WTC11 (cell line): ENCODE measurements at regions of chr7 and their contacts with region 1.

Region 1: GRCh38 chr7:100456558-100456957 is 7.5 kb downstream of the SPACDR start:
- DNase-seq: peak; percentile 47
- ATAC-seq: peak; percentile 73
- H3K4me3 Mint-ChIP-seq: no peak overlapping the region
- H3K27ac Mint-ChIP-seq: no peak overlapping the region
- H3K4me1 Mint-ChIP-seq: peaks cover 10% of the 10 kb centered on the region
- H3K27me3 Mint-ChIP-seq: no peaks in the 10 kb centered on the region; the same call in 1 of the 2 replicates
- CTCF ChIP-seq: no peak

Region 2: DNA sequence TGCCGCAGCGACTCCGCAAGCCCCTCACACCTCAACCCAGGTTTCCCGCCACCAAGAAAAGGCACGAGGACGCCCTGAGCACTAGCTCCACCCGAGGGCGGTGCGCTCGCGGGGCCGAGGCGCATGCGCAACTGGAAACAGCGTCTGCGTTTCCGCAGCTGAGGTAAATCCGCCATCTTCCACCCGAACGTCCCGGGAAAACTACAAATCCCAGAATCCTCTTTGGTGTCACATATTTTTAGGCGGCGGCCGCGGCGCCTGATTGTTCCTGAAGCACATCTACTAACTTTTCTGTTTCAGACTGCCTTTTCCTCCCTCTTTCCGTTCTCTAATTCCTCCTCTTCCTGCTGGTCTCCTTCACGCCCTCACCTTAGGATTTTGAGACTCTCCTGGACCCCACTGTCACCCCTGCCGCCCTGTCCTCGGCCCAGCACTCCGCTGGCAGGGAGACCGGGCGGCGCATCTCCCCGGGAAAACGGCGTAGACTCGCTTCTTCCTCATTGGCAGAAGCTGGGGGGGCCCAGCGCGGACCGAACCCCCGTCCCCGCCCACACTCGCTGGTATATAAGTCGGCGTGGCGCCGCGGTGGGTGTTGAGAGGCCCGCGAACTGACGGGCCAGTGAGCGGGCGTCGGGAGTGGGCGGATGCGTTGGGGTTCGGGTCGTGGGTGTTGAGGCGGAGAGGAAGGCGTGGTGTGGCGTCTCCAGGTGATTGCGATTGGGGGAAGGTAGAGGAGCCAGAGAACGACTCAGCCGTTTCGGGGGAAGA is 28.2 kb before region 1 on chr7 and contains the start of gene ZCWPW1:
- CTCF ChIA-PET with region 1: interaction called, 20 read pairs
- POLR2A ChIA-PET with region 1: no interaction called
- DNase-seq: peak; percentile 95
- ATAC-seq: peak; percentile 47
- H3K4me3 Mint-ChIP-seq: peak within 1 kb of the TSS; percentile 97
- H3K27ac Mint-ChIP-seq: peak within 1 kb of the TSS; percentile 100
- H3K4me1 Mint-ChIP-seq: peaks cover 19% of the 10 kb centered on the region
- H3K27me3 Mint-ChIP-seq: peaks cover 30% of the 10 kb centered on the region
- CTCF ChIP-seq: no peak
- total RNA-seq, gene ZCWPW1: 1.4 to 1.5 TPM (median 1.4 TPM) in 3 replicates

Region 3: GRCh38 chr7:100444311-100445278 is 12.0 kb before region 1 on chr7:
- CTCF ChIA-PET with region 1: interaction called, 46 read pairs
- POLR2A ChIA-PET with region 1: no interaction called
- DNase-seq: no peak
- ATAC-seq: peak; percentile 31
- H3K4me3 Mint-ChIP-seq: no peak overlapping the region
- H3K27ac Mint-ChIP-seq: peak overlapping the region; percentile 63
- H3K4me1 Mint-ChIP-seq: peaks cover 5% of the 10 kb centered on the region
- H3K27me3 Mint-ChIP-seq: no peaks in the 10 kb centered on the region
- CTCF ChIP-seq: no peak

Region 4: GRCh38 chr7:100478966-100479665 is 22.6 kb after region 1 on chr7 and contains the start of gene TSC22D4:
- CTCF ChIA-PET with region 1: interaction called, 11 read pairs
- POLR2A ChIA-PET with region 1: interaction called, 3 read pairs
- DNase-seq: peak; percentile 96
- ATAC-seq: peak; percentile 70
- H3K4me3 Mint-ChIP-seq: peak within 1 kb of the TSS; percentile 78
- H3K27ac Mint-ChIP-seq: peak within 1 kb of the TSS; percentile 92
- H3K4me1 Mint-ChIP-seq: peaks cover 20% of the 10 kb centered on the region
- H3K27me3 Mint-ChIP-seq: no peaks in the 10 kb centered on the region
- CTCF ChIP-seq: no peak
- total RNA-seq, gene TSC22D4: 27.5 to 34.5 TPM (median 29.7 TPM) in 3 replicates

Region 5: DNA sequence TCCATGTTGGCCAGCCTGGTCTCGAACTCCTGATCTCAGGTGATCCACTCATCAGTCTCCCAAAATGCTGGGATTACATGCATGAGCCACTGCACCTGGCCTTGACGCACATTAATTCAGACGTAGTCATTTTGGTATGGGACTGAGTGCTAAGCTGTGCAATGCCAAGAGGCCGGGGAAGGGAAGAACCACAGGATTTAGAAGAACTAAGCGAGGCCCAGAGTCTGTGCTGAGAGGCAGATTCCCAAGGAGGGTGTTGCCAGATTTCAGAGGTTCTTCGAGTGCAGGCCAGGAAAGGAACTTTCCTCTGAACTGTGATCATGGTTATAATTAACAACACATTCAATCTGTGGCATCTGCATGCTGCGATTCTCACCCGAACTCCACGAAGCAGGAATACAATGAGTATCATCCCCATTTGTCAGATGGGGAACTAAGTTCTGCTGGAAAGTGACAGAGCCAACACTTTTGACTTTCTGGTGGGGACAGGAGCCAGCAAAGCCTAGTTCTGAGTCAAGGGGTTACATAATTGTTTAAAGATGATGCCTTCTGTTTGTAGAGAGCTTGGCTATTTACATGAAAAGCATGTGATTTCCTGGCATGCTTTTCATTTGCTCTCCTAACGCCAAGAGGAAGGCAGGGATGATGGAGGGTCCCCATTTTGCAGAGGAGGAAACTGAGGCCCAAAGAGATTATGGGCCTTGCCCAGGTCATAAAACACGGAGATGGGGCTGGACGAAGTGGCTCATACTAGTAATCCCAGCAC is 270.6 kb after region 1 on chr7:
- CTCF ChIA-PET with region 1: no interaction called
- POLR2A ChIA-PET with region 1: no interaction called
- DNase-seq: no peak
- ATAC-seq: no peak
- H3K4me3 Mint-ChIP-seq: no peak overlapping the region
- H3K27ac Mint-ChIP-seq: no peak overlapping the region
- H3K4me1 Mint-ChIP-seq: peaks cover 3% of the 10 kb centered on the region; the same call in 1 of the 2 replicates
- H3K27me3 Mint-ChIP-seq: peaks cover 14% of the 10 kb centered on the region
- CTCF ChIP-seq: no peak